Heart left ventricle (tissue), 16 donors: ENCODE measurements at regions of chr1 and their contacts with region 1.

Region 1: DNA sequence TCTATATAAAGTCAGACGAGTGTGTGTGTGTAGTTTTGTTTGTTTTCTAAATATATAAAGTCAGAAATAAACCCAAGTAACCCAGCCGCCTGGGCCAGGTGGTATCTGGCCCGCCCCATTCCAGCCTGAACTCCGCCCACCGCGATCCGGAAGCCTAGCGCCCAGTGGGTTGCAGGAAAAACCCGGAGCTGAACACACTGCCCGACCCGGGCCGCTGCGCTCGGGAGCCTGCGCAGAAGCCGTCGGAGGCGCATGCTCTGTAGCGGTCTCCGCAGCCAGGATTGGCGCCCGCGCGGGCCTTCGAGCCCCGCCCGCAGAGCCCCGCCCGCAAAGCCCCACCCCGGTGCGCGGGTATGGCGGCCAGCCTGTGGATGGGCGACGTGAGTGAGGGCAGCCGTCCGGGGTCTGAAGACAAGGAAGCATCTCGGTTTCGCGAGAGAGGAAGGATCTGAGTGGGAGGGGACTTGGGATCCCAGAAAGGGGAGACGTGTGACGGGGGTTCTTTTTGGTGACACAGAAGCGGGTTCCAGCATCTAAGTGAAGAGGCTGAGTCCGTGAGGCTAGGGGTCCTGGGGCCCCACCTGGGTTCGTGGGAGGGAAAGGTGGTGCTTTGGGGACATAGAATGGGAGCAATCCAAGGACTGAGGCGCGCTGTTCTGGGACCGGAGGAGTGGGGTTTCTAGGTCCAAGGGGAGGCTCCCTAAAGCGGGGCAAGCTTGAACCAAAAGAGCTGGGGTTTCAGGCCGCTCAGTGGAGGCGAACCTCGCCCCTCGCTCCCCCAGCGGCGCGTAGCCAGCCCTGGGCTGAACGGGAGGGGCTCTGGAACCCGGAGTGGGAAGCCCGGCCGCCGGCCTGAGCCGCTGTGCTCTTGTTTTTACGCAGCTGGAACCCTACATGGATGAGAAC is at the start of gene TRNAU1AP:
- DNase-seq: peak; percentile 96 to 98 (median 97)
- ATAC-seq: peak; percentile 98 to 99 (median 99)
- H3K4me3 ChIP-seq: peak within 1 kb of the TSS; percentile 62 to 96 (median 76)
- H3K27ac ChIP-seq: peak within 1 kb of the TSS; percentile 24 to 90 (median 83)
- H3K4me1 ChIP-seq: peaks cover 0 to 20% (median 8%) of the 10 kb centered on the region in 12 donors
- H3K27me3 ChIP-seq: no peaks in the 10 kb centered on the region
- CTCF ChIP-seq: peak in 1 of 12 donors; percentile 1
- POLR2A ChIP-seq: peak; percentile 19 to 80
- total RNA-seq, gene TRNAU1AP: 7.9 to 26.6 (median 15.5) TPM

Region 2: GRCh38 chr1:28518000-28518744 is 34.8 kb before region 1 on chr1:
- intact Hi-C with region 1: loop called in 4 of 10 experiments (anchors 2 to 5 kb)
- DNase-seq: peak; percentile 89 to 95 (median 91)
- ATAC-seq: peak; percentile 80 to 95 (median 92)
- H3K4me3 ChIP-seq: peak overlapping the region; percentile 38 to 91 (median 74)
- H3K27ac ChIP-seq: peak overlapping the region in 11 of 12 donors; percentile 71 to 88 (median 82)
- H3K4me1 ChIP-seq: peaks cover 4 to 18% (median 10%) of the 10 kb centered on the region in 12 donors
- H3K27me3 ChIP-seq: no peaks in the 10 kb centered on the region
- CTCF ChIP-seq: peak; percentile 96 to 100 (median 98)
- POLR2A ChIP-seq: peak in 1 of 2 donors; percentile 66

Region 3: DNA sequence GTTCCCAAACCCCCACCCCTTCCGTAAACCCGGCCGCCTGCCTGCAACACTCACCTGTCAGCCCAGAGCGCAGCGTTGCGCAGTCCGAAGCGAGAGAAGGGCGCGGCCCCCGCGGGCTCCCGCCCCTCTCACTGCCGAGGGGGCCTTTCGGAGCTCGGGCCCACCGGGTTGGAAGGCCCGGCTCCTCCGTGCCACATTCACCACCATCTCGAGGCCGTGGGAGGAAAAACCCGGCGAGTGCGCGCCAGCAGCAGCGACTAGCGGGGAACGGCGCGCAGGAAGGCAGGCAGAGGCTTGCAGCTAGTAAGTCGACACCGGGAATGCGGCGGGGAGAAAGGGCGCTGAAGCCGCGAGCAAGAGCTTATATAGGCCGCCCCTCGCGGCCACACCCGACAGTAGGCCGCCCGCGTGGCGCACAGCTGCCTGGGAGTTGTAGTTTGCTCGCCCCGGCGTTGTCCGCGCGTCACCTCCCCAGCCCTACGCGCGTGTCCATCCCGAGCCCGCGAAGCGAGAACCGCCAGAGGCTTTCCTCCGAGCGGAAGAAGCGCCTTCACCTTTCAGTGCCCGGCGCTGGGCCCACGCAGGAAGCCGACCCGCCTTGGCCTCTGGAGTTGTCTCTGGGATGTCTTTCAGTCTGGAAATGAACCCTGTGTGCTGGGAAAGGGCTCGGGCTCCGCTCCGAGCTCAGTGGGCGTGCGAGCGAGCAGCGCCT is 28.7 kb after region 1 on chr1:
- intact Hi-C with region 1: loop called in 2 of 10 experiments (anchors 1 to 2 kb)
- DNase-seq: peak; percentile 95 to 98 (median 97)
- ATAC-seq: peak; percentile 97 to 99 (median 99)
- H3K4me3 ChIP-seq: peak overlapping the region; percentile 67 to 99 (median 88)
- H3K27ac ChIP-seq: peak overlapping the region; percentile 59 to 94 (median 86)
- H3K4me1 ChIP-seq: peaks cover 0 to 52% (median 21%) of the 10 kb centered on the region in 12 donors
- H3K27me3 ChIP-seq: no peaks in the 10 kb centered on the region
- CTCF ChIP-seq: peak in 3 of 12 donors; percentile 7 to 32 (median 18)
- POLR2A ChIP-seq: peak; percentile 13 to 98